AG04449 (cell line): ENCODE measurements at regions of chr14 and their contacts with region 1.

Region 1: GRCh38 chr14:69107407-69108003 is 45.4 kb downstream of the DCAF5 start:
- DNase-seq: no peak
- H3K4me3 ChIP-seq: no peak overlapping the region
- CTCF ChIP-seq: peak; percentile 46

Region 2: DNA sequence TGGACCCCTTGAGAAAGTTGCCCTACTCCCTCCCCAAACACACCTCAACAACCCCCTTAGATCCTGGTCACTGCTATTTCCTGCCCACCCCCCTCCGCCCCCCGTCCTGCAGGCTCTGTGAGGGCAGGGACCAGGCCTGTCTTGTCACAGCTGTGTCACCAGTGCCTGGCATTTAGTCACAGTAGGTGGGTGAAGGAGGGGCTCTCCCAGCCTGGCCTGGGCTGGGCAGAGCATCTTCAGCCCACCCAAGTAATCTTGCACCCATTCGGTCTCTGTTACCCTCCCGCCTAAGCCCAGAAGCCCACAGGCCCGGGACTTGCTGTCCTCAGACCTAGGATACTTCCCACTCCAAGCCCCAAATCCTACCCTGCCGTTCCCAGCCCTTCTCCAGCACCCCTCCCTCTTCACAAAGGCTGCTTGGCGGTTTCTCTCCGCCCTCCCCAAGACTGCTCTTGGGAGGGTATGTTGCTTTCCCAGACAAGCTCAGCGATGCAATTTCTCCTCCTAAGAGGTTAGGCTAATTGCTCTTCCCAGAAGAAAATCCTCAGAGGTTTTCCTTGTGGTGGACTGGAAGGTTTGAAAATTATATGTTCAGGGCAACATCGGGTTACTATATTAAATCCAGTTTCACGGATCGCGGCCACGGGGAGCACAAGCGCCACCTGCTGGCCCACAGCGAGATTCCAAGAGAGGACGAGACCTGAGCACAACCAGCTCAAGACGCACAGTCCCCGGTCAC is 263.9 kb before region 1 on chr14:
- CTCF ChIA-PET with region 1: interaction called, 13 read pairs
- POLR2A ChIA-PET with region 1: no interaction called
- DNase-seq: no peak
- H3K4me3 ChIP-seq: no peak overlapping the region
- CTCF ChIP-seq: peak; percentile 94

Region 3: GRCh38 chr14:68884031-68885030 is 223.2 kb before region 1 on chr14:
- CTCF ChIA-PET with region 1: interaction called, 13 read pairs
- POLR2A ChIA-PET with region 1: no interaction called
- DNase-seq: peak; percentile 60
- H3K4me3 ChIP-seq: no peak overlapping the region
- CTCF ChIP-seq: no peak

Region 4: DNA sequence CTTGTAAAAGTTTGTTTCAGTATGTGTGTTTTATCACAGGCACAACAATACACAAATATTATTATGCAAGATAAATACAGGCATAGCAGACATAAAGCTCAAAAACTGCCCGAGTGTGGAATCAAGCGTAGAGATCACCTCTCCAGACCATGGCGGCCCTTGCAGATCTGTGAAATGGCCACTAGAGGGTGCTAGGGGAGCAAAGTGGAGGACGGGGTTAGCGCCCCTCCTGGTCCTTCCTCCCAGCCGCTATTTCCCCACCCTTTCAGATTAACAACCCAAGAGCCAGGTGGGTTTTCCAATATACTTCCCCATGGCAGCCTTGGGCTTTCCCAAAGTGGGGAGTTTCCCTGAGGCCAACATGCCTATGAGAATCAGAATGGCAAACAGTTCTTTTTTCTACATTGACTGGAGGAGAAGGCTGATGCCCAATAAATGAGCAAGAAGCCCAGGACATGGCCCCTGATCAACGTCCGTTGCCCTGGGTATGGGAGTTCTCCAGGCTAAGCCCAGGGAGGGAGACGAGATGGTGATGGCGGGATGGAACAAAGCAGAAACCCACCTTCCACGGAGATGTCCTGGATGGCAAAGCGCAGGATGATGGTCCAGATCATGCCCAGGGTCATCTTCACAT is 195.8 kb before region 1 on chr14:
- CTCF ChIA-PET with region 1: interaction called, 154 read pairs
- POLR2A ChIA-PET with region 1: interaction called, 3 read pairs
- DNase-seq: no peak
- H3K4me3 ChIP-seq: no peak overlapping the region
- CTCF ChIP-seq: peak; percentile 98

Region 5: DNA sequence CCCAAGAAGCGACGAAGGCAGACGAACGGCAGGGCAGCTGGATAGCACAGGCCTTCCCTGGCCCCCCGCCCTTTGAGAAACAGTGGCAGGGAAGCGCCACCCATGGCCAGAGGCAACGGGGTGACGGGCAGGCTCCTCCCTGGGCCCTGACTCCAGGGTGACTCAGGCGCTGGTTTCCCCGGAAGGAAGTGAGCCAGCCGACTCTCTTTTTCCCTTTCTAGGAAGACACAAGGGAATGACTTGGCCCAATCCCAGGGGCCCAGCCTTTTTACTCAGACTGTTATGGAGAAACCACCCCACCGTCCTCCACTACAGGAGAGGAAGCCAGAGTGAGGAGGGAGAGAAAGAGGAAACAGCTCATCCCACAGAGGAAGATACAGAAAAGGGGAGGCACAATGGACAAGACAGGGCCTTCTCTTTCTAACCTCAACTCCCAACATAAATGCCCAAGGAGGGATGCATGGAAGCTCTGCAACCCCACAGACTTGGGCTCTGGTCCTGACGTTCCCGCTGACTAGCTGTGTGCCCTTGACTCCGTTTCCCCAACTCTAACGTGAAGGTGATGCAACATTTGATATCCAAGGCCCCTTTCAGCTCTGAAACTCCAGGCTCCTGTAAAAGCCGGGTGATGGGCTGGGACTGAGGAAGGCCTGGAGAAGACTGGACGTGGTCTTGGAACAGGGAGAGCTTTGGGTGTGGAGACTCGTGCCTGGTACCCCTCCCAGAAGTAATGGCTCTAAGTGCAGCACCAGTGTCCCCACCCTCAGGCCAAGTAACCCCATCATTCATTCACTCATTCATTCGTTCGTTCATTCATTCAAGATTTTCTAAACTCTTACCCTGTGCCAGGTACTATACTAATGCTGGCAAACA is 156.2 kb before region 1 on chr14:
- CTCF ChIA-PET with region 1: interaction called, 12 read pairs
- POLR2A ChIA-PET with region 1: interaction called, 3 read pairs
- DNase-seq: no peak
- H3K4me3 ChIP-seq: no peak overlapping the region
- CTCF ChIP-seq: no peak

Region 6: GRCh38 chr14:69129264-69129880 is 21.9 kb after region 1 on chr14:
- CTCF ChIA-PET with region 1: interaction called, 15 read pairs
- POLR2A ChIA-PET with region 1: no interaction called
- DNase-seq: peak; percentile 55
- H3K4me3 ChIP-seq: no peak overlapping the region
- CTCF ChIP-seq: peak; percentile 83